Activated CD8-positive, alpha-beta T cell treated with anti-CD3 and anti-CD28 coated beads, Interleukin-2, amount 10 ng/mL, durations not matched to agents 7 days and 5 days (primary cell): ENCODE measurements at regions of chr1 and their contacts with region 1.

Region 1: GRCh38 chr1:148334339-148335130 is 148.6 kb downstream of the PPIAL4G start:
- DNase-seq: peak; percentile 85
- ATAC-seq: peak; percentile 91
- H3K4me3 Mint-ChIP-seq: peak overlapping the region; percentile 92
- H3K27ac Mint-ChIP-seq: peak overlapping the region; percentile 99
- H3K4me1 Mint-ChIP-seq: peaks cover 34% of the 10 kb centered on the region
- H3K27me3 Mint-ChIP-seq: peaks cover 43% of the 10 kb centered on the region

Region 2: GRCh38 chr1:147723691-147724323 is 610.7 kb before region 1 on chr1:
- CTCF ChIA-PET with region 1: no interaction called
- POLR2A ChIA-PET with region 1: no interaction called
- DNase-seq: peak; percentile 25
- ATAC-seq: no peak
- H3K4me3 Mint-ChIP-seq: no peak overlapping the region
- H3K27ac Mint-ChIP-seq: no peak overlapping the region
- H3K4me1 Mint-ChIP-seq: no peaks in the 10 kb centered on the region
- H3K27me3 Mint-ChIP-seq: peaks cover 30% of the 10 kb centered on the region

Region 3: GRCh38 chr1:148263128-148263905 is 71.2 kb before region 1 on chr1:
- CTCF ChIA-PET with region 1: interaction called, 5 read pairs
- POLR2A ChIA-PET with region 1: interaction called, 96 read pairs
- DNase-seq: peak; percentile 73
- ATAC-seq: peak; percentile 91
- H3K4me3 Mint-ChIP-seq: peak overlapping the region; percentile 83
- H3K27ac Mint-ChIP-seq: peak overlapping the region; percentile 84
- H3K4me1 Mint-ChIP-seq: peaks cover 14% of the 10 kb centered on the region
- H3K27me3 Mint-ChIP-seq: peaks cover 39% of the 10 kb centered on the region

Region 4: DNA sequence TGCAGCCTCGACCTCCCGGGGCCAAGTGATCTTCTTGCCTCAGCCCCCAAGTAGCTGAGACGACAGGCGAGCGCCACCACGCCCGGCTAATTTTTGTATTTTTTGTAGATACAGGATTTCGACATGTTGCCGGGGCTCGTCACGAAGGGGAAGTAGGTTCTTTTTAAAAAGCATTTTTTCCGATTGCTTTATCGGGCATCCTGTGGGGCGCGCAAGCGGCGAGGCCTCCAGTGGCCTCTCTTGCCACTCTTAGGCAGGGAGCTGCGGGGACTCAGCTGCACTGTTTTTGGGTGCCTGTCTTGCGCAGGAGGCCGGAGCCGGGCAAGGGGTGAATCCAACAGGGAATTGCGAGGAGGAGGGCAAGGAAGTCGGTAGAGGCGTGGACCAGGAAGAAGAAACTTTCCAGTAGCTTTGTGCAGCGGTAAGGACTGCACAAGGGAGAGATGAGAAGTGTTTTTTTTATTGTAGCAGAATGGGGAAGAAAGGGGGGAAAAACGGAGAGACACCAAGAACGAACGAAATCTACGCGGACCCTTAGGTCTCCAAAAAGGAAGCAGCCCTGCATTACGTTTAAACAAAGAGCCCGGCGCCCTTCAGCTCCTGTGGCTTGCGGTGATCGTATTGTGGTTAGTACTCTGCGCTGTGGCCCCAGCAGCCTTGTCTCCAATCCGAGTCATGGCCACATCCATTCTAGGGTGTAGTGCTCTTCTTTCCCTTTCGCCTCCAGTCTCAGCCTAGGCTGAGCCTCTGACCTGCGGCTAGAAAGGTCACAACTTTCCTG is 16.2 kb before region 1 on chr1:
- CTCF ChIA-PET with region 1: interaction called, 4 read pairs
- POLR2A ChIA-PET with region 1: interaction called, 25 read pairs
- DNase-seq: peak; percentile 90
- ATAC-seq: peak; percentile 97
- H3K4me3 Mint-ChIP-seq: peak overlapping the region; percentile 79
- H3K27ac Mint-ChIP-seq: peak overlapping the region; percentile 84
- H3K4me1 Mint-ChIP-seq: peaks cover 41% of the 10 kb centered on the region
- H3K27me3 Mint-ChIP-seq: peaks cover 62% of the 10 kb centered on the region

Region 5: DNA sequence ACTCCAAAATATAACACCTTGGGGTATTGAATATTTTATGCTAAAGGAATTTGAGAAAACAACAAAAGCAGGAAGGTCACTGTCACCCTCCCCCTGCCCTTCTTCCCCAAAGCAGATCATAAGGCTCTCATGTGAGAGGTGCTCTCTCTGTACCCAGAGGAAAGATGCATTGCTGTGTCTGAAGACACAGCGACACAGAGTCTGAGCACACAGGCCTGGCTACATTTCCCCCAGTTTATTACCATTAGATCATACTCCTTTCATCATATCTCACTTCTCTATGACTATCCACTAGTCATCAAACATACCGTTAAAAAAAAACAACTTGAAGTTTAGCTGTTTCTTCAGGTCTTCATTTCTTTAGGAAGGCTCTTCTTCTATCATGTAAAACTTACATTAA is 21.4 kb after region 1 on chr1:
- CTCF ChIA-PET with region 1: no interaction called
- POLR2A ChIA-PET with region 1: interaction called, 10 read pairs
- DNase-seq: no peak
- ATAC-seq: no peak
- H3K4me3 Mint-ChIP-seq: no peak overlapping the region
- H3K27ac Mint-ChIP-seq: no peak overlapping the region
- H3K4me1 Mint-ChIP-seq: peaks cover 11% of the 10 kb centered on the region
- H3K27me3 Mint-ChIP-seq: peaks cover 62% of the 10 kb centered on the region

Region 6: DNA sequence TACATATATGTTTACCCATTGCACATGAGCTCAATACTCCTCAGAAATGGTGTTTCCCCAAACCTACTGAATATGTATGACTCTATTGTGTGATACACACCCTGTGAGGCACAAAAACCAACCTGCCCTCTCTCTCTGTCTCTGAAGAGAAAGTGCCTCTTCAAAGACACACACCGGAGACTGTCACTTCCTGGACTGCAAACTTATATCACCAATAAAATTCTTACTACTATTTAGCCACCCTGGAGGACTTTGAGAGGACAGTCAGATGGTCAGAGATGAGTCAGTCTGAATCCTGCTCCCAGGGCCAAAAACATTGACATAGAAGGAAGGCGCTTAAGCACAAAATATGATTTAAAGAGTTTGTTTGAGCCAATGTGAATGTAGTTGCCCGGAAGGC is 38.2 kb after region 1 on chr1:
- CTCF ChIA-PET with region 1: interaction called, 3 read pairs
- POLR2A ChIA-PET with region 1: interaction called, 22 read pairs
- DNase-seq: peak; percentile 73
- ATAC-seq: peak; percentile 66
- H3K4me3 Mint-ChIP-seq: peak overlapping the region; percentile 71
- H3K27ac Mint-ChIP-seq: peak overlapping the region; percentile 98
- H3K4me1 Mint-ChIP-seq: peaks cover 59% of the 10 kb centered on the region
- H3K27me3 Mint-ChIP-seq: no peaks in the 10 kb centered on the region